Head of caudate nucleus (tissue), 42 donors: ENCODE measurements at regions of chr15 and their contacts with region 1.

Region 1: GRCh38 chr15:80475572-80475971 is 71.4 kb downstream of the ARNT2 start:
- DNase-seq: no peak

Region 2: GRCh38 chr15:80526556-80527340 is 51.2 kb after region 1 on chr15:
- intact Hi-C with region 1: loop called (anchors 10 kb)
- DNase-seq: no peak